ENCODE measurements at regions of chr4 and their contacts with region 1.

Region 1: DNA sequence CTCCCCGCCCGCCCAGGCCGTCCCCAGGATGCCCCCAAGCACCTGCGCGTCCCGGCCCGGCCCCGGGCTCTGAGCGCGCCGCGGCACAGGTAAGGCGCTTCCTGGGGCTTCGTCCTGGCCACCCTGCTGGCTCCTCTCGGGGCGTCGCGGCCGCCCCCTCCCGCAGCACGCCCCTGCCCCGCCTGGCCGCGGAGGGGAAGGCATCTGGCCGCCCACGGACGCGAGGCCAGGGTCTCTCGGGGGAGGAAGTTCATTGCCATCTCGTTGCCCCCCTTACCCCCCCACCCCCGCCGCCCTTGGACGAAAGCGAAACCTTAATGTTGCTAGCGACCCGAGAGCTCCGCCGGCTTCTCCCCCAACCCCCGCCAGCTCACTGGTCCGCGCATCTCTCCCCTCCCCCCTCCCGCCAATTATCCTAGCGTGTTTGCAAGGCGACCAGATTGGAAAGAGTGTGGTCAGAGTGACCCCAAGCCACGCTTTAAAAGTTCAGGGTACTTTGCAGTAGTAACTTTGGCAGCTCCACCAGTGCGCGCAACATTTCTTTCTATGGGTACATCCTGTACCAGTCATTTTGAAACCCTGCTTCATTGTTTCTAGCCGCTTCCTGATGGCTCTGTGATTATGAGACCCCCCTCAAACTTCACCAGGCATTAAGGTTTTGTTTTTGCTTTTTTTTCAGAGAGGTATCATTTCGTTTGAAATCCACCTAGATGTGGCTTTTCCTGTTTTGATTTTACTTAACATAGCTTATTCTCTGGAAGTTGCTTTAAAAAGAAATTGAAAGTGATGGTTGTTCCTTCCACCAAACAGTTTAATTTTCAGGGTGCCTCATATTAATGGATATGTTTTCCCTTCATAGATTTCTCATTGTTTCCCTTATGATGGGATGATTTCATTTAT is 626 bp downstream of the TBC1D1 start:
- DNase-seq: no peak
- ATAC-seq: peak; percentile 47
- H3K4me3 Mint-ChIP-seq: peak overlapping the region; percentile 94
- H3K27ac Mint-ChIP-seq: peak overlapping the region; percentile 97
- H3K4me1 Mint-ChIP-seq: peaks cover 57% of the 10 kb centered on the region
- H3K27me3 Mint-ChIP-seq: no peaks in the 10 kb centered on the region
- CTCF ChIP-seq: no peak

Region 2: GRCh38 chr4:37675587-37676290 is 215.8 kb before region 1 on chr4:
- CTCF ChIA-PET with region 1: no interaction called
- POLR2A ChIA-PET with region 1: no interaction called
- intact Hi-C with region 1: loop called (anchors 2 kb)
- DNase-seq: peak; percentile 15
- ATAC-seq: peak; percentile 92
- H3K4me3 Mint-ChIP-seq: peak overlapping the region; percentile 50
- H3K27ac Mint-ChIP-seq: peak overlapping the region; percentile 67
- H3K4me1 Mint-ChIP-seq: peaks cover 29% of the 10 kb centered on the region
- H3K27me3 Mint-ChIP-seq: peaks cover 9% of the 10 kb centered on the region
- CTCF ChIP-seq: no peak

Region 3: GRCh38 chr4:37826295-37827029 is 65.0 kb before region 1 on chr4 and contains the start of gene PGM2:
- CTCF ChIA-PET with region 1: interaction called, 3 read pairs
- POLR2A ChIA-PET with region 1: interaction called, 38 read pairs
- intact Hi-C with region 1: loop called (anchors 1 kb)
- DNase-seq: peak; percentile 91
- ATAC-seq: peak; percentile 96
- H3K4me3 Mint-ChIP-seq: peak within 1 kb of the TSS; percentile 100
- H3K27ac Mint-ChIP-seq: peak within 1 kb of the TSS; percentile 98
- H3K4me1 Mint-ChIP-seq: peaks cover 27% of the 10 kb centered on the region
- H3K27me3 Mint-ChIP-seq: no peaks in the 10 kb centered on the region
- CTCF ChIP-seq: no peak
- total RNA-seq, gene PGM2: 26.4 and 29.6 TPM in 2 replicates

Region 4: DNA sequence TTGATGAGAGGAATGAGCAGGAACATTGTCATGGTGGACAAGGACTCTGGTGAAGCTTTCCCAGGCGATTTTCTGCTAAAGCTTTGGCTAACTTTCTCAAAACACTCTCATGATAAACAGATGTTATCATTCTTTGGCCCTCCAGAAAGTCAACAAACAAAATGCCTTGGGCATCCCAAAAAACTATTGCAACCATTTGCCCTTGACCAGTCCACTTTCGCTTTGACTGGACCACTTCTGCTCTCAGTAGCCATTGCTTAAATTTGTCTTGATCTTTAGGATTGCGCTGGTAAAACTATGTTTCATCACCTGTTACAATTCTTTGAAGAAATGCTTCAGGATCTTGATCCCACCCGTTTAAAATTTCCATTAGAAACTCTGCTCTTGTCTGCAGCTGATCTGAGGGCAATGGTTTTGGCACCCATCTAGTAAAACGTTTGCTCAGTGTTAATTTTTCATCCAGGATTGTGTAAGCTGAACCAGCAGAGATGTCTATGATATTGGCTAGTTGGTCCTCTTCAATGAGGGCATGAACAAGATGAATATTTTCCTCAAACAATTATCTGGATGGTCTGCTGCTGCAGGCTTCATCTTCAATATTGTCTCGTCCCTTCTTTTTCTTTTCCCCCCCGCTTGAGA is 14.1 kb after region 1 on chr4:
- CTCF ChIA-PET with region 1: no interaction called
- POLR2A ChIA-PET with region 1: interaction called, 7 read pairs
- intact Hi-C with region 1: loop called (anchors 2 kb)
- DNase-seq: no peak
- ATAC-seq: no peak
- H3K4me3 Mint-ChIP-seq: no peak overlapping the region
- H3K27ac Mint-ChIP-seq: no peak overlapping the region
- H3K4me1 Mint-ChIP-seq: peaks cover 11% of the 10 kb centered on the region
- H3K27me3 Mint-ChIP-seq: no peaks in the 10 kb centered on the region
- CTCF ChIP-seq: no peak

Region 5: GRCh38 chr4:38281371-38282071 is 390.0 kb after region 1 on chr4:
- CTCF ChIA-PET with region 1: no interaction called
- POLR2A ChIA-PET with region 1: no interaction called
- intact Hi-C with region 1: no loop called
- DNase-seq: no peak
- ATAC-seq: no peak
- H3K4me3 Mint-ChIP-seq: no peak overlapping the region
- H3K27ac Mint-ChIP-seq: no peak overlapping the region
- H3K4me1 Mint-ChIP-seq: no peaks in the 10 kb centered on the region
- H3K27me3 Mint-ChIP-seq: no peaks in the 10 kb centered on the region
- CTCF ChIP-seq: no peak

Region 6: GRCh38 chr4:38319456-38320342 is 428.2 kb after region 1 on chr4:
- CTCF ChIA-PET with region 1: no interaction called
- POLR2A ChIA-PET with region 1: no interaction called
- intact Hi-C with region 1: loop called (anchors 5 kb)
- DNase-seq: peak; percentile 84
- ATAC-seq: peak; percentile 77
- H3K4me3 Mint-ChIP-seq: peak overlapping the region; percentile 78
- H3K27ac Mint-ChIP-seq: peak overlapping the region; percentile 88
- H3K4me1 Mint-ChIP-seq: peaks cover 28% of the 10 kb centered on the region
- H3K27me3 Mint-ChIP-seq: no peaks in the 10 kb centered on the region
- CTCF ChIP-seq: peak; percentile 72

Region 7: GRCh38 chr4:39638354-39639240 is 1747.1 kb after region 1 on chr4 and contains the start of gene SMIM14:
- CTCF ChIA-PET with region 1: no interaction called
- POLR2A ChIA-PET with region 1: interaction called, 4 read pairs
- intact Hi-C with region 1: loop called (anchors 5 kb)
- DNase-seq: peak; percentile 92
- ATAC-seq: peak; percentile 82
- H3K4me3 Mint-ChIP-seq: peak within 1 kb of the TSS; percentile 96
- H3K27ac Mint-ChIP-seq: peak within 1 kb of the TSS; percentile 97
- H3K4me1 Mint-ChIP-seq: peaks cover 58% of the 10 kb centered on the region
- H3K27me3 Mint-ChIP-seq: no peaks in the 10 kb centered on the region
- CTCF ChIP-seq: no peak
- total RNA-seq, gene SMIM14: 83.1 and 86.5 TPM in 2 replicates